ENCODE measurements at regions of chr15 and their contacts with region 1.

Region 1: GRCh38 chr15:65054333-65055200 is 9.4 kb downstream of the SLC51B start:
- H3K4me3 Mint-ChIP-seq: no peak overlapping the region
- H3K27ac Mint-ChIP-seq: no peak overlapping the region
- H3K4me1 Mint-ChIP-seq: peaks cover 11% of the 10 kb centered on the region
- H3K27me3 Mint-ChIP-seq: peaks cover 19% of the 10 kb centered on the region

Region 2: GRCh38 chr15:64961013-64961412 is 93.6 kb before region 1 on chr15:
- intact Hi-C with region 1: no loop called
- H3K4me3 Mint-ChIP-seq: no peak overlapping the region
- H3K27ac Mint-ChIP-seq: peak overlapping the region; percentile 31
- H3K4me1 Mint-ChIP-seq: no peaks in the 10 kb centered on the region
- H3K27me3 Mint-ChIP-seq: no peaks in the 10 kb centered on the region

Region 3: DNA sequence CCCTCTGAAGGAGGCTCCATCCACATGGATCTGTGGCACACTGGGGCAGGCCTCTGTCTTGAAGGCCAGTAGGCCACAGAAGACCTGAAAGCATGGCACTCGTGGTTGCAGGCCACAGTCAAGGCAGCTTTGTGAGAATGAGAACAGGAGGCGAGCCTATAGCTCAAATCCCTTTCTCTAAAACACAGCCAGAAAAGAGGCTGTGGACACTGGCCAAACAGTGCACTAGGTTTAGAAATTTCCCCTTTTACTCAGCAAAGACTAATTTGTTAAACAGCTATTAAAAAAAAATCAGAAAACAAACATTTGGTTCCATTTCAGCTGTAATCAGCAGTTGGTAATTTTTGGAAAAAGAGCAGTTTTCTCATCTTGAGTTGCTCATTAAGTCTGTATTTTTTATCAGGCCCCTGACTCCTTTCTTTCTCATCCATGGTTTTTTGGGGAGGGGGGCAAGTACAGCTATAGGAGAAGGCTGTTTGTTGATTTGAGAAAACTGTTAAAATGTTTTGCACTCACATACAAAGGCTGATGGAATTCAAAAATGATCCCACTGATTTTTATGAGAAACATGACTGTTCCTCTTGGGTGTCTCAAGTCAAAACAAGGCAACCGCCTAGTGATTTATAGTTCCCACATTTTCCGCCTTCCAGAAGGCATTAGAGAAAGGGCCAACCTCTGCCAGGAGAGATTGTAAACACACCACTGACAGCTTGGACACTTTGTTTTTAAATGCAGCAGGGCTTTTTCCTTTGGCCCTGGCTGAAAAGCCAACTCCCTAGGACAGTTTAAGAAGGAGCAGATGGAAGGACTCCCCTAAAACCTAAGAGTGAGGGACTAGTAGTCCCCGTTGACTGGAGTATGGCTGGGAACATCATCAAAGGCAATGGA is 204.1 kb after region 1 on chr15:
- intact Hi-C with region 1: no loop called
- H3K4me3 Mint-ChIP-seq: no peak overlapping the region
- H3K27ac Mint-ChIP-seq: no peak overlapping the region
- H3K4me1 Mint-ChIP-seq: no peaks in the 10 kb centered on the region
- H3K27me3 Mint-ChIP-seq: no peaks in the 10 kb centered on the region

Region 4: GRCh38 chr15:65292938-65293518 is 238.5 kb after region 1 on chr15:
- intact Hi-C with region 1: loop called (anchors 10 kb)
- H3K4me3 Mint-ChIP-seq: no peak overlapping the region
- H3K27ac Mint-ChIP-seq: no peak overlapping the region
- H3K4me1 Mint-ChIP-seq: peaks cover 11% of the 10 kb centered on the region
- H3K27me3 Mint-ChIP-seq: no peaks in the 10 kb centered on the region

Measured in dendritic cell treated with granulocyte-macrophage colony-stimulating factor and Interleukin-4, amounts not matched to agents 40 ng/mL and 50 ng/mL, for 4 days (primary cell).